BJ (cell line): ENCODE measurements at regions of chr18 and their contacts with region 1.

Region 1: DNA sequence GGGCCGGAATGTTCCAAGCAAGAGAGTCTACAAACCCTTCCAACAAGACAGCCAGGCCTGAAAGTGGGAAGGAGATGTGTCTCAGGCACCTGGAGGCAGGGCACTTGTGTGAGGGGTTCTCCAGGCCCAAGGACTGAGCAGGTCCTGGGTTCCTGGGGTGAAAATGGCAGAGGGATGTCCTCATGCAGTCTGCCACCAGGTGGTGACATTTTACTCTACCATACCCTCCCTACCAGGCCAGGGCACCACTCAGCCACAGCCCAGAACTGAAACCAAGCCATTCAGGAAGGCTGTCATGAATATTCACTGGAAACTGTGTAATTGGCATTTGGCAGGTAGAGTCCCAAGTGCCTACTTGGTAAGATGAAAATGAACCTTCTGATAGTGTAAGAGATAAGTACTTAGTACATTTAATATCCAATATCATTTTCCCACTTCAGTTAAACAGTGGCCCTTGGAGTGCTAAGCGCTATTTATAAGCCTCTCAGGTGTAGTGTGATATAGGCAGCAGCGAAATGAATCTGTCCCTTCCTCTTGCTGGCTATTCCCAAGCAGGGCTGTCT is 185.1 kb downstream of the MYO5B start:
- DNase-seq: no peak
- H3K4me3 ChIP-seq: no peak overlapping the region
- H3K27me3 ChIP-seq: no peaks in the 10 kb centered on the region; the same call in 1 of the 2 replicates
- CTCF ChIP-seq: peak; percentile 46

Region 2: GRCh38 chr18:49849331-49850217 is 160.3 kb before region 1 on chr18:
- CTCF ChIA-PET with region 1: no interaction called
- POLR2A ChIA-PET with region 1: no interaction called
- DNase-seq: peak; percentile 66
- H3K4me3 ChIP-seq: no peak overlapping the region
- H3K27me3 ChIP-seq: 0 out of 2 replicates have a peak, but pooled peaks cover 2% of the 10 kb centered on the region
- CTCF ChIP-seq: no peak

Region 3: GRCh38 chr18:50024466-50024865 is 14.6 kb after region 1 on chr18:
- CTCF ChIA-PET with region 1: no interaction called
- POLR2A ChIA-PET with region 1: no interaction called
- DNase-seq: no peak
- H3K4me3 ChIP-seq: no peak overlapping the region
- H3K27me3 ChIP-seq: no peaks in the 10 kb centered on the region; the same call in 1 of the 2 replicates
- CTCF ChIP-seq: no peak

Region 4: DNA sequence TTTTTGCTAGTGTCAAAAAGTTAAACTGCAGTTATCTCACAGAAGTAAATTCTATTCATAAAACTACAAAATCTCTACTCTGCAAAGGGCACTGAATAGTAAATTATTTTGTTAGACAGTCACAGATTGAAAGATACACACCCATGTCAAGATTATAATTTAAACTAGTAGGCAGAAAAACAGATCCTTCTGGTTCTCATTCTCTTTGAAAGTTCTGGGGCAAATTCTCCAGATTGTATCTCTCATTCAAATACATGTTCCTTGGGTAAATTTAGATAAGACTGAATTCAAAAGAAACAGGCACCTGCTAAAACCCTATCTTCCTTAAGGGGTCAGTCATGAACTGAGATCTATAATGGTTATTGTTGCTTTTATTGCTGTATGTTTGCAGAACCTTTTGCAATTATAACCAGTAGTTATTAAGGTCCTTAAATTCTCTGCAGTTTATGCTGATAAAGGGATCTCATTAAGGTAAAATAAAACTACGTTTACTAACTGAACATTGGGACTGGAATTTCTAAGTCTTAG is 101.5 kb after region 1 on chr18:
- CTCF ChIA-PET with region 1: no interaction called
- POLR2A ChIA-PET with region 1: no interaction called
- DNase-seq: no peak
- H3K4me3 ChIP-seq: no peak overlapping the region
- H3K27me3 ChIP-seq: no peaks in the 10 kb centered on the region
- CTCF ChIP-seq: no peak

Region 5: DNA sequence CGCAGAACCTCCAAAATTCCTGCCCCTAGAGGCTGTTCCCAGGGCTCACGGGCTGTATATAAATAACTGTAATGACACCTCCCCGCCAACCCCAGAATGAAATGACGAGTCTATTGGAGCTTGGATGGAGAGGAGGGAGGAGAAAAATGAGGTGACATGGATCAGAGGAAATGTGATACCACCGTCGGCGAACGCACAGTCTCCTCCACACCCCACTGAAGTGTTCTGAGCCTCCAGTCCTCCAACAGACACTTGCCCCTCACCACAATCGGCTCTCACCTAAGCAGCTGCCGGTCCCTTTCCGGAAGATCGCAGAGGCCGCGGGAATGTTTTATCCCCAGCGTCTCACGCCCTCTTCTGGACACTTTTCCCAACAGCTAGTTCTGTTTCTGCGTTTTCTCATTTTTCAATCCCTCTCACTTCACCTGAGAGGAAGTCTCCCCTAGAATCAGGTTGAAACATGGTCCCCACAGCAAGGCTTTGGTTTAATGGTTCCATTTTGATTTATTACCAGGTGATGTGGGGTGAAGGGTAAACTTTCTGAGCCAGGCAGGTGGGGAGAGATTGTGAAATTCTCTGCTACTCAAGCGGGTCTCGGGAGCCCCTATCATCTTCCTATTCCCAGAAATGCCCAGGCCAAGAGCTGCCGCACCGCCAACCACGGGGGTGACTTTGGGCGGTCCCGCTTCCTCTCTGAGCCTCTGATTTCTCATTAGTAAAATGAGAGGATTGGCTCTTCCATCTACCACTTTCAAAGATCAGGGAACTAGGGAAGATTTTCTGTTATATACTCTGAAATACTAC is 194.1 kb after region 1 on chr18:
- CTCF ChIA-PET with region 1: interaction called, 14 read pairs
- POLR2A ChIA-PET with region 1: no interaction called
- DNase-seq: no peak
- H3K4me3 ChIP-seq: no peak overlapping the region
- H3K27me3 ChIP-seq: peaks cover 3% of the 10 kb centered on the region; the same call in 1 of the 2 replicates
- CTCF ChIP-seq: peak; percentile 64